ENCODE measurements at regions of chr17 and their contacts with region 1.

Region 1: DNA sequence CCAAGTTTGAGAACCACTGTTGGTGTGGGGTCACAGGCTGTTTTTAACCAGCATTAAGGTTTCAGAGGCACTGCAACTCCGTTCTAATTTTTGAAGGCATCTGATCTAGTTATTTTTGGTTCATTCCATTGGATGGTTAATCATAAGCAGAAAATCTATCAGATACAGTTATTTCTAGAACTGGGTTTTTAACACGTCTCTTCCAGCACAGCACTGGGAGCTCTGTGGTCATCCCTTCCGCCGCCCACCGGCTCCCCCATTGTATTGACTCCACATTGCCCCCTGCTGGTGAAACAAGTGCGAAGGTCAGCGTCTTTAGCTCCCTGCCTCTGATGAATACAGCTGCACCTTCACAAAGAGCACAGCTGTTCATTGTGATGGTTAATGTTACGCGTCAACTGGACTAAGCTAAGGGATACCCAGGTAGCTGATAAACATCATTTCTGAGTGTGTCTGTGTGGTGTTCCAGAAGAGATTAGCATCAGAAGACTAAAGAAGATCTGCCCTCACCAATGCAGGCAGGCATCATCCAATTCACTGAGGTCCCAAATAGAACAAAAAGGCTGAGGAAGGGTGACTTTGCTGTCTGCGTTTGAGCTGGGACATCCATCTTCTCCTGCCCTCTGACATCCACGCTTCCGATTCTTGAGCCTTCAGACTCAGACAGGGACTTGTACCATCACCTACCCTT is 8.5 kb downstream of the CCL18 start:
- DNase-seq: peak; percentile 58
- H3K4me3 ChIP-seq: no peak overlapping the region
- H3K27ac ChIP-seq: no peak overlapping the region
- H3K4me1 ChIP-seq: no peaks in the 10 kb centered on the region
- H3K27me3 ChIP-seq: peaks cover 4 to 10% of the 10 kb centered on the region in 2 experiments
- CTCF ChIP-seq: peak; percentile 73 to 82
- POLR2A ChIP-seq: no peak

Region 2: DNA sequence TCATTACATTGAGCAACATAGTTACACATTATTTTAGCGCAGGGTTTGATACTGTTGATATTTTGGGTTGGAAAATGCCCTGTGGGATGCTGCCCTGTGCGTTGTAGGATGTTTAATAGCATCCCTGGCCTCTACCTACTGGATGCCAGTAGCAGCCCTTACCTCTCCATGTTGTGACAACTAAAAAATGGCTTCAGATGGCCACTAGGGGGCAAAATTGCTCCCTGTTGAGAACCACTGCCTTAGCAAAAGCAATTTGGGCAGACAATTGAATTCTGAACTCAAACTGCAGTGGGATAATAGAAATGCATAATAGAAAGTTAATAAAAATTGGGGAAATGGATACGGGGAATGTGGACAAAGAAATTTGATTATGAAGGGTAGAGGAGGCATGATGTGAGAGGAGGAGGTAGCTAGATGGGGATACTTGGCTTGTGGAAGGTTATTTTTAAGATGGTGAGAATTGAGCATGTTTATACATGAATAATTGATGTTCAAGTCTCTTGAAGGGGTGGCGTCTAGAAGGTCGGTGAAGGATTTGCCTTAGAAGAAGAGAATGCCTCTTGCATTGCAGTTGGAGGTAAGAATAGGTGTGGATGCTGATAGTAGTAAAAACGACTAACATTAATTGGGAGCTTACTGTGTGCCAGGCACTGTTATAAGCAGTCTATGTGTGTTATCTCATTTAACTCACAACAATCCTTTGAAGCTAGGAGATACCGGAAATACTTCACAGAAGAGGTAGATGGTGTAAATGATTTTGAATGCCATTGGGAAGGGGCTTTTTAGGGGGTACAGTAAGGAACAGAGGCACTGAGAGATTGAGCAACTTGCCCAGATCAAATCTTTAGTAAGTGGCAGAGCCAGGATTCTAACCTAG is 222.9 kb before region 1 on chr17:
- CTCF ChIA-PET with region 1: no interaction called
- POLR2A ChIA-PET with region 1: no interaction called
- dilution Hi-C with region 1: no loop called
- intact Hi-C with region 1: loop called (anchors 10 kb)
- DNase-seq: peak; percentile 65
- H3K4me3 ChIP-seq: no peak overlapping the region
- H3K27ac ChIP-seq: no peak overlapping the region
- H3K4me1 ChIP-seq: no peaks in the 10 kb centered on the region
- H3K27me3 ChIP-seq: no peaks in the 10 kb centered on the region
- CTCF ChIP-seq: peak; percentile 68 to 75
- POLR2A ChIP-seq: no peak

Region 3: DNA sequence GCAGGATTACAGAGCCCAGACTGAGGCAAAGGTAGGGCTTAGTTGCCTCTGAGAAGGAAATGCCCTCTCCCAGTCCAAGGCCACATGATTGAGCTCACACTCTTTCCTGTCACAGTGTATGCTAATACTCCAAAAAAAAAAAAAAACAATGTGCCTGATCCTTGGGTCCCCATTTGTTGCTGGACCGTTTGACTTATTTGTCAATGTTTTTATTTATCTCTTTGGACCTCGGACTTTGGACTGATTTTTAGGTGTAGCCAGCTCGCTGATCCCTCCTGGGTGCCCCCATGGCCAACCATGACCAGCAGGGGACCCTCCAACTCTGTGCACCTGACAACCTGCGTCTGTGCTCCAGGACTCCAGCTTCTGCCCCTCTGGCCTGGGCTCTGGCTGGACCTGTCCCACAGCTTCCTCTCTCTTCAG is 90.7 kb before region 1 on chr17:
- CTCF ChIA-PET with region 1: interaction called, 467 read pairs
- POLR2A ChIA-PET with region 1: interaction called, 4 read pairs
- dilution Hi-C with region 1: no loop called
- intact Hi-C with region 1: no loop called
- DNase-seq: no peak
- H3K4me3 ChIP-seq: no peak overlapping the region
- H3K27ac ChIP-seq: no peak overlapping the region
- H3K4me1 ChIP-seq: peaks cover 24% of the 10 kb centered on the region
- H3K27me3 ChIP-seq: no peaks in the 10 kb centered on the region
- CTCF ChIP-seq: peak in 1 of 2 donors; percentile 11
- POLR2A ChIP-seq: no peak

Region 4: GRCh38 chr17:36008998-36009665 is 63.4 kb before region 1 on chr17:
- CTCF ChIA-PET with region 1: interaction called, 13 read pairs
- POLR2A ChIA-PET with region 1: no interaction called
- dilution Hi-C with region 1: no loop called
- intact Hi-C with region 1: loop called (anchors 2 kb)
- DNase-seq: peak; percentile 36
- H3K4me3 ChIP-seq: no peak overlapping the region
- H3K27ac ChIP-seq: no peak overlapping the region
- H3K4me1 ChIP-seq: no peaks in the 10 kb centered on the region
- H3K27me3 ChIP-seq: no peaks in the 10 kb centered on the region
- CTCF ChIP-seq: peak; percentile 49 to 82
- POLR2A ChIP-seq: no peak

Region 5: DNA sequence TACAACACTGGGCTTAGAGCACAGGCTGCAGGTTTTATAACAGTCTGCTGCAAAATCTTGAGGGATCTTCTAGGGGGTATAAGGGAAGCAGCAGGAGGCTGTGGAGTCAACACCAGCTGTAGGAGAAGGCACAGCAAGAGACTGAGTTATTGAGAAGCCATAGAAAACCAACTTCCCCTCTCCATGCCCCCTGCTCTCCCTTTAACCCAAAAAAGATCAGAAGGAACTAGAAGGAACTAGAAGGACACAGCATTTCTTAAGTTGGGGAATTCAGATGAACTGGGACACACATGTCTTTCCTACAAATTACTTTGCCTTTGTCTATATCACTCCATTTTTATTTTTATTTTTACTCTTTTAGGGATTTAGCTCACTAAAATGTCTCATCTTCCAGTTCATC is 14.7 kb before region 1 on chr17:
- CTCF ChIA-PET with region 1: interaction called, 13 read pairs
- POLR2A ChIA-PET with region 1: no interaction called
- dilution Hi-C with region 1: no loop called
- intact Hi-C with region 1: no loop called
- DNase-seq: no peak
- H3K4me3 ChIP-seq: no peak overlapping the region
- H3K27ac ChIP-seq: no peak overlapping the region
- H3K4me1 ChIP-seq: no peaks in the 10 kb centered on the region
- H3K27me3 ChIP-seq: peaks cover 0 to 4% of the 10 kb centered on the region in 2 experiments
- CTCF ChIP-seq: no peak
- POLR2A ChIP-seq: no peak

Region 6: GRCh38 chr17:36188891-36189306 is 116.3 kb after region 1 on chr17:
- CTCF ChIA-PET with region 1: no interaction called
- POLR2A ChIA-PET with region 1: no interaction called
- dilution Hi-C with region 1: no loop called
- intact Hi-C with region 1: no loop called
- DNase-seq: no peak
- H3K4me3 ChIP-seq: no peak overlapping the region
- H3K27ac ChIP-seq: no peak overlapping the region
- H3K4me1 ChIP-seq: no peaks in the 10 kb centered on the region
- H3K27me3 ChIP-seq: peaks cover 0 to 6% of the 10 kb centered on the region in 2 experiments
- CTCF ChIP-seq: no peak
- POLR2A ChIP-seq: no peak

Measured in endothelial cell of umbilical vein (primary cell).